Activated T-helper 2 cell treated with anti-CD3 and anti-CD28 coated beads, Interferon-gamma antibody, Interleukin-2, Interleukin-4, amounts not matched to agents 10 μg/mL and 5 μg/mL and 100 μg/mL, durations not matched to agents 14 hours and 24 hours and 36 hours (primary cell): ENCODE measurements at regions of chr20 and their contacts with region 1.

Region 1: DNA sequence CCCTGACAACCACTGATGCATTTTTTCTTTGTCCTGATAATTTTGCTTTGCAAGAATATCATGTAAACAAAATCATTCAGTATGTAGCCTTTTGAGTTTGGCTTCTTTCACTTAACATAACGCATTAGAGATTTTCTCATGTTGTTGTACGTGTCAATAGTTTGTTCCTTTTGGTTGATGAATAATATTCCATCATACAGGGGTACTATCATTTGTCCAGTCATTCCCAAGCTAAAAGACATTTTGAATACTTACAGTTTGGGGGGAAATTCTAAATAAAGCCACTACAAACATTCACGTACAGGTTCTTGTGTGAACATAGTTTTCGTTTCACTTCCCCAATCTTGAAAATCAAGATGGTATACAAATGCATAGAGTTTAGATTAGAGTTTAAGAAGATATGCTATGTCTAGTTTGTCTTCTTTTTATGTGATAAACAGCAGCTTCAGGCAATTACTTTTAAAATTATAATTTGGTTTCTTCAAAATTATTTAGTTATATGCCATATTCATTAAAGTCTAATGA is 5.2 kb downstream of the HAO1 start:
- DNase-seq: no peak
- H3K4me3 Mint-ChIP-seq: no peak overlapping the region
- H3K27ac Mint-ChIP-seq: no peak overlapping the region
- H3K4me1 Mint-ChIP-seq: no peaks in the 10 kb centered on the region
- H3K27me3 Mint-ChIP-seq: peaks cover 8% of the 10 kb centered on the region

Region 2: GRCh38 chr20:8094850-8095249 is 159.8 kb after region 1 on chr20:
- intact Hi-C with region 1: no loop called
- DNase-seq: no peak
- H3K4me3 Mint-ChIP-seq: no peak overlapping the region
- H3K27ac Mint-ChIP-seq: no peak overlapping the region
- H3K4me1 Mint-ChIP-seq: no peaks in the 10 kb centered on the region
- H3K27me3 Mint-ChIP-seq: peaks cover 3% of the 10 kb centered on the region

Region 3: GRCh38 chr20:8722276-8722928 is 787.3 kb after region 1 on chr20:
- intact Hi-C with region 1: loop called (anchors 1 kb)
- DNase-seq: no peak
- H3K4me3 Mint-ChIP-seq: no peak overlapping the region
- H3K27ac Mint-ChIP-seq: no peak overlapping the region
- H3K4me1 Mint-ChIP-seq: no peaks in the 10 kb centered on the region
- H3K27me3 Mint-ChIP-seq: no peaks in the 10 kb centered on the region